ENCODE measurements at regions of chr2 and their contacts with region 1.

Region 1: DNA sequence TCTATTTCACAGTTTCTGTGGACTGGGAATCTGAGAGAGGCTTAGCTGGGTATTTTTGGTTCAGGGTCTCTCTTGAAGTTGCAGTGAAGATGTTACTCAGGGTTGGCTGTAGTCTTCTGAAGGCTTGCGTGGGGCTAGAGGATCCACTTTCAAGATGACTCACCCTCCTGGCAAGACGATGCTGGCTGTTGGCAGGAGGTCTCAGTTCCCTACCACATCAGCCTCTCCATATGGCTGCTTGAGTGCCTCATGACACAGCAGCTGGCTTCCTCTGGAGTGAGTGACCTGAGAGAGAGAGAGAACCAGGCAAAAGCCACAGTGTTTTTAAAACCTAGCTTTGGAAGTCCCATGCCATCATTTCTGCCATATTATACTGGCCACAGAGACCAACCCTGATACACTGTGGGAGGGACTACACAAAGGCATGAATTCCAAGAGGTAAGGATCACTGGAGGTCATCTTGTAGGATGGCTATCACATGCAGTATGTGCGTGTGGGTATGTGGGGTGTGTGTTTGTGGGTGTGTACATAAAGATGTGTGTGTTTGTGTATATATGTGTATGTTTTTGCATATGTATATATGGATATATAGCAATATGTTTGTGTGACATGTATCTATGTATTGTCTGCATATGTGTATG is 25.1 kb downstream of the DNPEP start:
- DNase-seq: no peak
- CTCF ChIP-seq: no peak

Region 2: GRCh38 chr2:219207884-219208740 is 154.5 kb before region 1 on chr2:
- CTCF ChIA-PET with region 1: no interaction called
- POLR2A ChIA-PET with region 1: no interaction called
- DNase-seq: no peak
- CTCF ChIP-seq: no peak

Region 3: DNA sequence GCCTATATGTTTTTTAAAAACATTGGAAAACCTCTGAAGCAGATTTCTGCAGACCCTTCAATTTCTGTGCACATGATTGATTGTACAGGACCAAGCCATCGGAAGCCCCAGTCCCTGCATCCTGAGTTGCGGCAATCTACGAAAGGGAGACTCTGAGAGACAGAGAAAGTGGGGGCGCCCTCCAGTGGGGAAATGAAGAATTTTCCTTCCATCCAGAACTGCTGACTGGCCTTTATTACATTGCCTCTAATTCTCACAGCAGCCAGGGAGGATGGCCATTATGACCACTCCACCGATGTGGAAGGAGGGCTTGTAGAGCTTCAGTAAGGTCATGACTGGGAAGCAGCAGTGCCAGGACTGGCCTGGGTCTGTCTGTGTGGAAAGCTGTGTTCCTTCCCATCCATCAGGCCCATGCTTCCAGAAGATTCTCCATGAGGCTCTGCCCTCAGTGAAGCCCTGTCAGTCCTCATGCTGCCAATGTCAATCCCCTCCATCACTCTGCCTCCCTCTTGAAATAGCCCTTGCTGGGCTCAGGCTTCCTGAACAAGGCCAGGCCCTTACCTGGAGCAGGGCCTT is 10.1 kb before region 1 on chr2:
- CTCF ChIA-PET with region 1: interaction called, 18 read pairs
- POLR2A ChIA-PET with region 1: no interaction called
- DNase-seq: peak; percentile 75
- CTCF ChIP-seq: peak; percentile 65

Region 4: DNA sequence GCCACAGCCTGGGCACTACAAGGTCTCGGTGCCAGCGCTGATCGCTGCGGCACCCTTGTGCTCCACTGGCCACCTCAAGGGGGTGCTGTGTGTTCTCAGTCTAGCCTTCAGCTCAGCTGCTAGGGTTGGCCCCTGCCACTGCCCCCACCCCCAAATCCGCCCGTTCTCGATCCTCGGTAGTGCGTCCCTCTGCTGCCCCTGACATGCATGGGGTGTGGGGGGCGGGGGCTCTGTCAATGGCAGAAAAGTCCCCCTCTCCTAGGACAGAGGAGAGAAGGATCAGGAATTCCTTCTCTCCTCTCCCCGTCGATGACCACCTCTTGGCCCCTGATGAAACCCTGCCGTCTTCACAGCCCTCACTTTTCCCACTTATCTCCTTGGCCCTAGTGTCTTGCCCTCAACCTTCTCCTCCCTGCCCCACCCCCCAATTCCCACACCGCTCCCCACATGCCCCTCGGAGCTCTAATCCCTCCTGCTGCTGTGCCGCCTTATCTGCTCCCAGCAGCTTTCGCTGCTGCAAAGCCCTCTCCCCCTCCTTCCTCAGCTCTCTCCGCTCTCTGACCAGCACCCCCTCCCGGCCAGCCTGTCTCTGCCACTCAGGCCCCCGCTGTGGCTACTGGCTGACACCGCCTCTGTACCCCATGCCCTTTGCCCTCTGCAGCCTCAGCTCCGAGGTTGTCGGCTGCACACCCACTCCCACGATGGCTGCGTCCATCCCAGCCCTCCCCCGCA is 147.3 kb after region 1 on chr2:
- CTCF ChIA-PET with region 1: no interaction called
- POLR2A ChIA-PET with region 1: no interaction called
- DNase-seq: peak; percentile 70
- CTCF ChIP-seq: peak; percentile 81

Measured in GM10248 (cell line).